ENCODE measurements at regions of chr21 and their contacts with region 1.

Region 1: GRCh38 chr21:34745557-34746255 is 76.9 kb downstream of the CLIC6 start:
- DNase-seq: peak; percentile 76
- H3K4me3 ChIP-seq: peak overlapping the region in 1 of 2 experiments; percentile 14; a peak in 1 of 4 replicates
- H3K27ac ChIP-seq: no peak overlapping the region; a peak in 1 of 4 replicates
- H3K4me1 ChIP-seq: no peaks in the 10 kb centered on the region; a peak in 1 of 4 replicates
- H3K27me3 ChIP-seq: peaks cover 5% of the 10 kb centered on the region; the same call in 1 of the 2 replicates
- CTCF ChIP-seq: peak; percentile 91
- EP300 ChIP-seq: no peak
- RAD21 ChIP-seq: peak; percentile 97

Region 2: DNA sequence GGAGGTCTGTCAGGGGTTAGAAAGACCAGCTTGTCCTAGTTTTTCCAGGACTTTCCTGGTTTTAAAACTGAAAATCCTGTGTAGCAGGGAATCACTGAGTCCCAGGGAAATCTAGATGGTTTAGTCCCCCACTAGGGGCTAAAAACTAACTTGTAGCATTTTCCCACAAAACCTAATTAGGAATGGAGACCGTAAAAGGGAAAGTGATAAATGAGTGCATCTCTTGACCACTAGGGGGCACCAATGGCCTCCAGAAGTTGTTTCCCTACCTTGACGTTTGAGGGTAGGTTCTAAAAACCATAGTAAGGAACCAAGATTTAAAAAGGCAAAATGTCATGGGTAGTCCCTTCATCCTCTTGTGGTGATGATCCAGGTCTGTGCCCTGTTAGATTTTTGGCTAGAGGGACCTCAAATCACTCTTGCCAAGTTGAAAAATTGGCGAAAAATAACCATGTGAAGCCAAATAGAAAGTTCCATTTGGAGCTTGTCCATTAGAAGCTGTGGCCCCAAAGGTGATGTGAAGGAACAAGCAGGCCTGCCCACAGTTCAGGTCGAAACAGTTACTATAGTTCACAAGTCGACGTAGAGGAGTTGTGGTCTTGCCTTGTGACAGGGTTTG is 52.4 kb before region 1 on chr21:
- CTCF ChIA-PET with region 1: interaction called, 12 read pairs
- POLR2A ChIA-PET with region 1: no interaction called
- DNase-seq: peak; percentile 63
- H3K4me3 ChIP-seq: no peak overlapping the region; a peak in 1 of 4 replicates
- H3K27ac ChIP-seq: no peak overlapping the region
- H3K4me1 ChIP-seq: no peaks in the 10 kb centered on the region; a peak in 1 of 4 replicates
- H3K27me3 ChIP-seq: peaks cover 38% of the 10 kb centered on the region; the same call in 1 of the 2 replicates
- CTCF ChIP-seq: peak; percentile 87
- EP300 ChIP-seq: no peak
- RAD21 ChIP-seq: peak; percentile 80

Region 3: GRCh38 chr21:34775793-34776192 is 30.1 kb after region 1 on chr21:
- CTCF ChIA-PET with region 1: interaction called, 11 read pairs
- POLR2A ChIA-PET with region 1: no interaction called
- DNase-seq: no peak
- H3K4me3 ChIP-seq: no peak overlapping the region
- H3K27ac ChIP-seq: no peak overlapping the region
- H3K4me1 ChIP-seq: no peaks in the 10 kb centered on the region; a peak in 1 of 4 replicates
- H3K27me3 ChIP-seq: no peaks in the 10 kb centered on the region
- CTCF ChIP-seq: no peak
- EP300 ChIP-seq: no peak
- RAD21 ChIP-seq: no peak

Region 4: DNA sequence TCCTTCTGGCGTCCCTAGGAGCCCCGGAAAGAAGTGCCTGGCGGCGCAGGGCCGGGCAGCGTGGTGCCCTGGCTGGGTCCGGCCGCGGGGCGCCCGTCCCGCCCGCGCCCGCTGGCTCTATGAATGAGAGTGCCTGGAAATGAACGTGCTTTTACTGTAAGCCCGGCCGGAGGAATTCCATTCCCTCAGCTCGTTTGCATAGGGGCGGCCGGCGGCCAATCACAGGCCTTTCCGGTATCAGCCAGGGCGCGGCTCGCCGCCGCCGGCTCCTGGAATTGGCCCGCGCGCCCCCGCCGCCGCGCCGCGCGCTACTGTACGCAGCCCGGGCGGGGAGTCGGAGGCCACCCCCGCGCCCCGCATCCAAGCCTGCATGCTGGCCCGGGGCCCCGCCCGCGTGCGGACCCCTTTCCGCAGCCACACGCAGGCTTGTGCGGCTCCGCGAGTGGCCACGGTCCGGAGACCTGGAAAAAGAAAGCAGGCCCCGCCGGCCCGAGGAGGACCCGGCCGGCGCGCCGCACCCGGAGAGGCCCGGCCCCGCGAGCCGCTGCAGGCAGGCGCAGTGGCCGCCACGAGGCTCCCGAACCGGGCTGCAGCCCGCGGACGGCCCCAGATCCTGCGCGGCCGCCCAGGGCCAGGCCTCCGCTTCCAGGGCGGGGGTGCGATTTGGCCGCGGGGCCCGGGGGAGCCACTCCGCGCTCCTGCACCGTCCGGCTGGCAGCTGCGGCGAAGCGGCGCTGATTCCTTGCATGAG is 143.0 kb after region 1 on chr21:
- CTCF ChIA-PET with region 1: interaction called, 11 read pairs
- POLR2A ChIA-PET with region 1: no interaction called
- DNase-seq: peak; percentile 93
- H3K4me3 ChIP-seq: peak overlapping the region; percentile 81
- H3K27ac ChIP-seq: peak overlapping the region; percentile 86 to 95
- H3K4me1 ChIP-seq: peaks cover 0 to 7% of the 10 kb centered on the region in 2 experiments; a peak in 2 of 4 replicates
- H3K27me3 ChIP-seq: no peaks in the 10 kb centered on the region
- CTCF ChIP-seq: no peak
- EP300 ChIP-seq: no peak
- RAD21 ChIP-seq: no peak

Region 5: GRCh38 chr21:35840197-35840799 is 1094.6 kb after region 1 on chr21:
- CTCF ChIA-PET with region 1: interaction called, 49 read pairs
- POLR2A ChIA-PET with region 1: no interaction called
- DNase-seq: peak; percentile 38
- H3K4me3 ChIP-seq: no peak overlapping the region
- H3K27ac ChIP-seq: no peak overlapping the region
- H3K4me1 ChIP-seq: no peaks in the 10 kb centered on the region
- H3K27me3 ChIP-seq: no peaks in the 10 kb centered on the region
- CTCF ChIP-seq: peak; percentile 98
- EP300 ChIP-seq: no peak
- RAD21 ChIP-seq: peak; percentile 91